Left ventricle myocardium superior (tissue), 1 donor: ENCODE measurements at regions of chr17 and their contacts with region 1.

Region 1: GRCh38 chr17:8991514-8992285 is 26.2 kb upstream of the PIK3R5 start:
- DNase-seq: peak; percentile 43
- ATAC-seq: peak; percentile 74

Region 2: DNA sequence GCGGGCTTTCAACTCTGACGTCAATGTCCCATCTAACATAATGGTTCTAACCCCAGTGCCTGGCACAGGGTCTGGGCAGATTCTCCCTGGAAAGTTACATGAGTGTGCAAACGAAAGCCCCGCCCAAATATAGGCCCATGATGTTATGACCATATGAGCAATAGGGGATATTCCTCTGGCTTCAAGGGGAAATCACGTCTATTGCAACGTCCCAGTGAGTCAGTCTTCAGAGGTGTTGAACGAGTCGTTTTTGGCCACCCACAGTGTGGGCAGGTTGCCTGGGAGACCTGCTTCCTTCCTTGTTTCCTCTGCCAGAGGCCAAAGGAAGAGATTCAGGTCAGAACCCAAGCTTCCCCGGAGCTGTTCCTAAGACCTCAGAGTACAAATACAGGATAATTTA is 56.5 kb before region 1 on chr17:
- intact Hi-C with region 1: no loop called
- DNase-seq: no peak
- ATAC-seq: no peak

Region 3: DNA sequence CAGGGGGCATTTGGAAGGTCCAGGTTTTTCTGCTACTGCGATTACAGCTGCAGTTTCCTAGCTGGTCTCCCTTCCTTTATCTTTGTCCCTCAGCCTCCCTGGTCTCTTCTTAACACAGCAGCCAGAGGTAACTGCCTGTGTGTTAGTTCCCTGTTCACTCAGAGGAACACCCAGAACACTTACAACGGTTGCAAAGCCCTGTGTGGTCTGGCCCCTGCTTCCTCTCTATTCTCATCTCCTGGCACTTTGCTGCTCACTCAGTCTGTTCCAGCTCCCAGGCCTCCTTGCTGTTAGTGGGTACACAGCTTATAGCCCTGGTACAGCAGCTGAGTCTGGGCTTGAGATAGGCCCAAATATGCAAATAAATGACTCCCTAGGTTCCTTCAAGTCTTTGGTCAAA is 46.0 kb after region 1 on chr17:
- intact Hi-C with region 1: no loop called
- DNase-seq: no peak
- ATAC-seq: no peak

Region 4: GRCh38 chr17:9138101-9138717 is 146.5 kb after region 1 on chr17:
- intact Hi-C with region 1: no loop called
- DNase-seq: peak; percentile 77
- ATAC-seq: peak; percentile 96

Region 5: DNA sequence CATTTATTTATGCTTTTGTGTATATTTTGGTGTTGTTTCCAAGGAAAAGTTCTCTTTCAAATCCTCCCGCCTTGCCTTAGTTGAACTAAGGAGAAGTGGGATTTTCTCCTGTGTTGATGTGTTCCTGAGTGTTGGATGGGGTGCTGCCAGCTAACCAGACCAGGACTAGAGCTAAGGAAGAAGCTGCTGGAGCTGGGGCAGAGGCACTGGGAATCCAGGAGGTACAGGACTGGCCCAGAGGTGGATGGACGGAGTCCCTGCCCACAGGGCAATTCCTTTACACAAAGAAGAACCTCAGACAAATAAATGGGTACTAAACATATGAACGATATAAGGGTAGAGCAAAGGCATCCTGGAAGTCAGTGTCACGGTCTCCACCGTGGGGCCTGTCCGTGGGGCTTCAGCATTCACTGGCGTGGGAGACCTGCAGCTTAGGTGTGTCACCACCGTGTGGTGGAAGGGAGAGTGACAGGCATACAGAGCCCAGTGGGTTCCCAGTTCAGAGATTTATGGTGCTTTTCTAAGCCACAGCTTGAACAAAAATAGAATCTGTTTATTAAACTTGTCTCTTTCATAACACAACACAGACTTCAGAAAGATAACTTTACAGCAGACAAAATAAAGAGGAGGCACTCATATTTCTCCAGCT is 300.3 kb after region 1 on chr17:
- intact Hi-C with region 1: loop called (anchors 10 kb)
- DNase-seq: peak; percentile 58
- ATAC-seq: peak; percentile 95

Region 6: GRCh38 chr17:9529033-9529700 is 537.5 kb after region 1 on chr17:
- intact Hi-C with region 1: loop called (anchors 5 kb)
- DNase-seq: no peak
- ATAC-seq: peak; percentile 37